ENCODE measurements at regions of chr18 and their contacts with region 1.

Region 1: DNA sequence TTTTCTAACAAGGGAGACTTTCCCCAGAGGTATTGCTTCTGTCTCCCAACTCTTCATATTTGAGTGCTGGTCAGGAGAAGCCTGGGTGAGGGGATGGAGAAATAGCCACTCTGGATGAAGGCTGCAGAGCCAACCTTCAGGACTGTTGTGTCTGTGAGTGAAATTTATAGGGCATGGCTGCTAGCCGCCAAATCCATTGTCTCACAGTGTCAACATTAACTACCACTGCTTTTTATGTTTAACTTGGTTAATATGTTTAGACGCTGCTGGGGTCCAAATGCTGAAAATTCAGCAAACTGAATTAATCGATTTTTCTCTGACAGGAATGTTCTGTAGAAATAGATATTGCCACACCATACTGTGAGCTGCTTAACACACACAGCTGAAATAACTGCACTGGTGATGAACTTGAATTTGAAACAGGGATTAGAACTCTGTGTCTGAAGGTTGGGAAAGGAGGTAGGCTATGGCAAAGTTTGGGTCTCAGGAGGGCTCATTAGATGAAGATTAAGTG is 281.0 kb downstream of the DCC start:
- DNase-seq: no peak
- ATAC-seq: no peak
- H3K4me3 ChIP-seq: no peak overlapping the region
- H3K4me3 Mint-ChIP-seq: no peak overlapping the region
- H3K27ac ChIP-seq: no peak overlapping the region
- H3K27ac Mint-ChIP-seq: no peak overlapping the region
- H3K4me1 ChIP-seq: no peaks in the 10 kb centered on the region
- H3K4me1 Mint-ChIP-seq: no peaks in the 10 kb centered on the region
- H3K27me3 ChIP-seq: no peaks in the 10 kb centered on the region
- H3K27me3 Mint-ChIP-seq: no peaks in the 10 kb centered on the region

Region 2: DNA sequence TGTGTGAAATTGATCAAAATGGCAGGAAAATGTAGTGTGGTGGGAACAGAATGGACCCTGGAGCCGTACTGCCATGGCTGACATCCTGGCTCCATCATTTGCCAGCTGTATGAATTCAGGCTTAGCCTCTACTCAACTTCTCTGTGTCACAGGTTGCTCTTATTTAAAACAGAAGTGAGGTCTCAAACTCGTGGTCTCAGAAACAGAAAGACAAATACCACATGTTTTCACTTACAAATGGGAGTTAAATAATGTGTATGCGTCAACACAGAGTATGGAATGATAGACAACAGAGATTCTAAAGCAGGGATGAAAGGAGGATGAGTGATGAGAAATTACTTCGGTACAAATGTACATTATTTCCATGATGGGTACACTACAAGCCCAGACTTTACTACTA is 53.6 kb before region 1 on chr18:
- CTCF ChIA-PET with region 1: no interaction called
- POLR2A ChIA-PET with region 1: no interaction called
- intact Hi-C with region 1: no loop called
- DNase-seq: no peak
- ATAC-seq: no peak
- H3K4me3 ChIP-seq: no peak overlapping the region
- H3K4me3 Mint-ChIP-seq: no peak overlapping the region
- H3K27ac ChIP-seq: no peak overlapping the region
- H3K27ac Mint-ChIP-seq: no peak overlapping the region
- H3K4me1 ChIP-seq: no peaks in the 10 kb centered on the region
- H3K4me1 Mint-ChIP-seq: no peaks in the 10 kb centered on the region
- H3K27me3 ChIP-seq: no peaks in the 10 kb centered on the region
- H3K27me3 Mint-ChIP-seq: no peaks in the 10 kb centered on the region

Region 3: GRCh38 chr18:52682260-52682659 is 61.3 kb after region 1 on chr18:
- CTCF ChIA-PET with region 1: no interaction called
- POLR2A ChIA-PET with region 1: no interaction called
- intact Hi-C with region 1: loop called in 1 of 2 experiments (anchors 10 kb)
- DNase-seq: no peak
- ATAC-seq: no peak
- H3K4me3 ChIP-seq: no peak overlapping the region
- H3K4me3 Mint-ChIP-seq: no peak overlapping the region
- H3K27ac ChIP-seq: no peak overlapping the region
- H3K27ac Mint-ChIP-seq: no peak overlapping the region
- H3K4me1 ChIP-seq: no peaks in the 10 kb centered on the region
- H3K4me1 Mint-ChIP-seq: no peaks in the 10 kb centered on the region
- H3K27me3 ChIP-seq: no peaks in the 10 kb centered on the region
- H3K27me3 Mint-ChIP-seq: peaks cover 0 to 6% (median 0%) of the 10 kb centered on the region in 5 donors

Measured in naive thymus-derived CD4-positive, alpha-beta T cell (primary cell).